Common myeloid progenitor, CD34-positive (primary cell): ENCODE measurements at regions of chr6 and their contacts with region 1.

Region 1: GRCh38 chr6:123715006-123715875 is 78.5 kb upstream of the TRDN start:
- DNase-seq: peak; percentile 34 to 70 (median 62)
- H3K4me3 ChIP-seq: no peak overlapping the region
- H3K27ac ChIP-seq: no peak overlapping the region
- H3K4me1 ChIP-seq: no peaks in the 10 kb centered on the region
- H3K27me3 ChIP-seq: peaks cover 0 to 2% (median 0%) of the 10 kb centered on the region in 5 experiments

Region 2: DNA sequence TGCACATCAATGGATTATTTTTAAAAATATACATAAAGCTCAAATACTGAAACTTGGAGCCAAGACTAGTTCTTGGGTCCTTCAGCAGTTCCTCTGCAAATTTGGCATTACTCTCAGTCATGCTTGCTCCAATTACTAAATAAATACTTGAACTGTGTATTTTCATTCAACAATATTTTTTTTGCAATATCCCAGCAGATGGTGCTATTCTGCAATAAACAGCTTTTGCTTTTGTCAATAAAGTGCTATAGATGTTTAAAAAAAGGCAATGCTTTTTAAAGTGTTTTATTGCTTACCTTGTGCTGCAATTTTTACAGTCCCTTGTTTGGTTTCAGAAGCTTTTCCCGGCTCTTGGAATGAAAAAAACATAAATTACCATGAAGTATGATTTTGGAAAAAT is 321.9 kb before region 1 on chr6:
- CTCF ChIA-PET with region 1: interaction called, 13 read pairs
- POLR2A ChIA-PET with region 1: no interaction called
- DNase-seq: peak in 2 of 3 donors; percentile 30 to 31
- H3K4me3 ChIP-seq: no peak overlapping the region
- H3K27ac ChIP-seq: no peak overlapping the region
- H3K4me1 ChIP-seq: no peaks in the 10 kb centered on the region
- H3K27me3 ChIP-seq: peaks cover 0 to 11% (median 0%) of the 10 kb centered on the region in 5 experiments

Region 3: DNA sequence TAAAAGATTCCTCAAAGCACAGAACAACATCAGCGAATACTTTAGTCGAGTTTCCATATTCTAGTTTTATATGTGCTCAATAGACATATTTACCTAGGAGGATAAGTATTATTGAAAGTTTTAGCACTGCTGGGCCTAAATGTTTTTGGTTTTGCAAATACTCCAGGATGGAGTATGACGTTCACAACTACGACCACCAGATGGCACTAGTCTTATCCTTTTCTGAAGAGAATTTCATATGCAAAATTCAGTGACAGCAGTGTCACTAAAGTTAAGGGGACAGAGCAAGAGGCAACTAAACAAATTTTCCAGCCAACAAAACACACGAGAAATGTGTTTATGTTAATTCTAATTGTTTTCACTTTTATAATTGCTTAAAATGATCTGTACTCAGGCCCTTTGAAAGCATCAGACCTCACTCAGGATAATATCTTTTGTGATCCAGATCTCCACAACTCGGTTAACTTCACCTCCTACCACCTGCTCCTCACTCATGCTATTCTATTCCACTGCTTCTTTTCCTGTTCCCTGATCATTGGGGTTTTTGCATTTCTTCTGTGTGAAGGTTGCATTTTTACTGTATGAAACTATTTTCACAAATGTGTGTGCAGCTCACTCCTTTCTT is 299.3 kb before region 1 on chr6:
- CTCF ChIA-PET with region 1: interaction called, 24 read pairs
- POLR2A ChIA-PET with region 1: no interaction called
- DNase-seq: peak; percentile 51 to 82 (median 75)
- H3K4me3 ChIP-seq: no peak overlapping the region
- H3K27ac ChIP-seq: no peak overlapping the region
- H3K4me1 ChIP-seq: no peaks in the 10 kb centered on the region
- H3K27me3 ChIP-seq: peaks cover 0 to 2% (median 0%) of the 10 kb centered on the region in 5 experiments

Region 4: DNA sequence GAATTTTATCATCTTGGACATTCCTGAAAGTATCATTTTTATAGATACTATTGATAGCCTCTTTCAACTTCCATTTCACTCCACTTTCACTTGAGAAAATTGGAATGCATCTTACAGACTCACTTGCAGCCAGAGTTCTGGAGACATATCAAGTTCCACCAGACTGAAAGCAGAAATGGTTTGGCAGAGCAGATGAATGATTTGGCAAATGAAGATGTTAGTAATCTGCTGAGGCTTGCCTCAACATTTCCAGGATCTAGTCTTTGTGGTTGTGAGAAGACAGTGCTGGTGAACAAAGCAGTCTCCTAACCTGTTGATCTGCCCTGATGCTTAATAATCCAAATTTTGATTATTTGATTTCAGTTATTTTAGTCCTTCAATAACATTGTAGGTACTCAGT is 281.1 kb before region 1 on chr6:
- CTCF ChIA-PET with region 1: no interaction called
- POLR2A ChIA-PET with region 1: no interaction called
- DNase-seq: no peak
- H3K4me3 ChIP-seq: no peak overlapping the region
- H3K27ac ChIP-seq: no peak overlapping the region
- H3K4me1 ChIP-seq: no peaks in the 10 kb centered on the region
- H3K27me3 ChIP-seq: no peaks in the 10 kb centered on the region

Region 5: GRCh38 chr6:124026694-124027093 is 311.5 kb after region 1 on chr6:
- CTCF ChIA-PET with region 1: no interaction called
- POLR2A ChIA-PET with region 1: no interaction called
- DNase-seq: peak; percentile 8 to 77 (median 73)
- H3K4me3 ChIP-seq: peak overlapping the region in 3 of 7 experiments; percentile 26 to 68 (median 37)
- H3K27ac ChIP-seq: no peak overlapping the region
- H3K4me1 ChIP-seq: peaks cover 0 to 13% (median 5%) of the 10 kb centered on the region in 4 experiments
- H3K27me3 ChIP-seq: no peaks in the 10 kb centered on the region